Prostate gland (tissue), 2 donors: ENCODE measurements at regions of chr7 and their contacts with region 1.

Region 1: DNA sequence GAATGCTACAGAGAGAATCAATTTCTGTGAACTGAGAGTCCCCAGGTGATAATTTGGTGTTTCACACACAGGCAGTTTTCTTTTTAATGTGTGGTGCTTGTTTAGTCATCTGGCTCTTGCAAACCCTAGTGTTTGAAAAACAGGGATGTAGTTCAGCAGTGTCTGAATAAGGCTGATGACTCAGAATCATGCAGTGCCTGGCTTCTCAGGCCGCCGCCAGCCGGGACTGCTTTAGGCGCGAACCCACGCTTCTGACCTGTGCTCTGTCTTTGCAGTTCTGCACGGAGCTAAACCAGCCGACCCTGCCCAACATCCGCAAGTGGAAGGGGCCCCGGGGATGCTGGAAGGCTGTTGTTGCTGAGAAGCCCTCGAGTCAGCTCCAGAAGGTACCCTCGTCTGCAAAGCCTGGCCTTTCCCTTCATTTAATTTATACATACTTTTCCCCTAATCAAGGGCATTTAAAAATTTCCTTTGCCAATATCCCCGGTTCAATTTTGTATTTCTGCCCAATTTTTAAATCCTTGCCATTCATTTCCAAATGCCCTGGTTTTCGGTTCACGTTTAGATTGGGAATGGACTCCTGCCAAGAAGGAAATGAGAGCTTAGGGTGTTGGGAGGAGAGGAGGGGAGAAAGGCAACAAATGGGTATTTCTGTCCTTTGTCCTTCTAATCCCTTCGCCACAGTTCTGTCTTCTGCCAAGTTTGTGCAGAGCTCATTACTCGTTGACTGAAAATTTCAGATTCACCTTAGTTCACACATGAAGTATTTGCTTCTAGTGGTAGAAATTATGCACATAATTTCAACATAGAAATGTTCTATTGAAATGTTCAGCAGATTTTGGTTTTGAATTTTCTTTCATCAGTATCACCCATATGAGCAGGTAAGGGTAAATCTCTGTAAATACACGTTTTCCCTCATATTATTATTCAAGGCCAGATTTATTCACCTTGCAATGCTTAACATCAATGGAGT is 108.5 kb upstream of the ANLN start:
- DNase-seq: peak; percentile 45
- H3K4me3 ChIP-seq: no peak overlapping the region
- H3K27ac ChIP-seq: peak overlapping the region in 1 of 2 donors; percentile 31
- H3K4me1 ChIP-seq: peaks cover 8% of the 10 kb centered on the region
- H3K27me3 ChIP-seq: no peaks in the 10 kb centered on the region
- CTCF ChIP-seq: peak in 1 of 4 experiments; percentile 14
- POLR2A ChIP-seq: no peak

Region 2: DNA sequence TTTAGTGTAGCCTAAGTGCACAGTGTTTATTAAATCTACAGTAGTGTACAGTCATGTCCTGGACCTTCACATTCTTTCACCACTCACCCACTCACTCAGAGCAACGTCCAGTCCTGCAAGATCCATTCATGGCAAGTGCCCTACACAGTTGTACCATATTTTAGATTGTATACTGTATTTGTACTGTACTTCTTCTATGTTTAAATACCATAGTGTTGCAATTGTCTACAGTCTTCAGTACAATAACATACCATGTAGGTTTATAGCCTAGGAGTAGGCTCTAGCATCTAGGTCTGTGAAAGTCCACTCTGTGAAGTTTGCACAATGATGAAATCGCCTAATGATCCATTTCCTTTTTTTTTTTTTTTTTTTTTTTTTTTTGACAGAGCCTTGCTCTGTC is 116.1 kb before region 1 on chr7:
- intact Hi-C with region 1: no loop called
- DNase-seq: no peak
- H3K4me3 ChIP-seq: no peak overlapping the region
- H3K27ac ChIP-seq: no peak overlapping the region
- H3K4me1 ChIP-seq: no peaks in the 10 kb centered on the region
- H3K27me3 ChIP-seq: no peaks in the 10 kb centered on the region
- CTCF ChIP-seq: no peak
- POLR2A ChIP-seq: no peak

Region 3: GRCh38 chr7:36207451-36208291 is 73.5 kb before region 1 on chr7:
- intact Hi-C with region 1: loop called (anchors 5 kb)
- DNase-seq: no peak
- H3K4me3 ChIP-seq: no peak overlapping the region
- H3K27ac ChIP-seq: peak overlapping the region; percentile 6 to 31
- H3K4me1 ChIP-seq: peaks cover 7% of the 10 kb centered on the region
- H3K27me3 ChIP-seq: no peaks in the 10 kb centered on the region
- CTCF ChIP-seq: peak in 1 of 4 experiments; percentile 10
- POLR2A ChIP-seq: no peak

Region 4: GRCh38 chr7:36232971-36233550 is 48.1 kb before region 1 on chr7:
- intact Hi-C with region 1: loop called (anchors 5 kb)
- DNase-seq: no peak
- H3K4me3 ChIP-seq: no peak overlapping the region
- H3K27ac ChIP-seq: peak overlapping the region; percentile 60 to 70
- H3K4me1 ChIP-seq: peaks cover 6% of the 10 kb centered on the region
- H3K27me3 ChIP-seq: no peaks in the 10 kb centered on the region
- CTCF ChIP-seq: no peak
- POLR2A ChIP-seq: no peak